GM10248 (cell line): ENCODE measurements at regions of chr17 and their contacts with region 1.

Region 1: DNA sequence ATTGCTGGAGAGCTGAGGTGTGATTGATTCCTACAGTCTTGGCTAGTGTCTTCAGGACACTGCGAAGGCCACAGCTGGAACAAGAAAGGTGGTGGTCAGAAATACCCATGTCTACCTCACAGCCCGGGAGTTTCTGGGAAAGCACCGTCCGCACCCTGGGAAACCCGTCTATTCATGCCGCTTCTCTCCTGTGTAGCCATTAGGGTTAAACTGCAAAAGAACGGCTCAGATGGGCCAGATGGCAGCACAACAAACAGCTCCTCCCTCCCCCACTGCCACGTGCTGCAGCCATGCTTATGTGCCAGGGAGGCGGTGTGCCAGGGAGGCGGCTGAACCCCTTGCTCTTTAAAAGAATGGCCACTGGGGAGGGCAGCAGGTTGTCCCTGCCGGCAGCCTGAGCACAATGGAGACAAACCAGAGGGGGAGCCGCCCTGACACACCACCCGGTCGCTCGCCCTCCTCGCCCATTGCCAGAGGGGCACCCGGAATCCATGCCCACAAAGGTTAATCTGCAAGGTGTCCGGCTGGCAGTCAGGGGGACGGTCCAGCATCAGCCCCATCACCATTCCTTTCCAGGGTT is 65.2 kb downstream of the CYTH1 start:
- DNase-seq: no peak
- CTCF ChIP-seq: no peak

Region 2: GRCh38 chr17:78728495-78728894 is 11.6 kb after region 1 on chr17:
- CTCF ChIA-PET with region 1: interaction called, 50 read pairs
- POLR2A ChIA-PET with region 1: interaction called, 7 read pairs
- DNase-seq: no peak
- CTCF ChIP-seq: no peak

Region 3: DNA sequence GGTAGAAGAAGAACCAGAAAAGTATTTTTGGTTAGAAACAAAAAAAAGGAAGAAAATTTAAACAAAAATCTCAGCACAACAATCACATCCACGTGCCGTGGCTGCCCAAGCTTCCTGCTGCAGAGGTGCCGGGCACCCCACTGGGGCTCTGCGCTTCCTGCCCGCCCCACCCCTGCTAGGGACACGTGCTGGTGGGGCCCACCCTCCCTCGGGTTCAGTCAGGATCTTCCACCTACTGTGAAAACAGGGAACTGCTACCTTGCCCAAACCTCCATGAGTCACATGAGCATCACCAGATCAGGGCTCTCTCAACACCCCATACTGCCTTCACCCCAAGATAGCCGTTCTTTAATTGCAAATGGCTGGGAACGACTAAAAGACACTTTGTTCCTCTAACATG is 89.5 kb after region 1 on chr17:
- CTCF ChIA-PET with region 1: no interaction called
- POLR2A ChIA-PET with region 1: no interaction called
- DNase-seq: no peak
- CTCF ChIP-seq: no peak